Heart left ventricle (tissue), 16 donors: ENCODE measurements at regions of chr5 and their contacts with region 1.

Region 1: DNA sequence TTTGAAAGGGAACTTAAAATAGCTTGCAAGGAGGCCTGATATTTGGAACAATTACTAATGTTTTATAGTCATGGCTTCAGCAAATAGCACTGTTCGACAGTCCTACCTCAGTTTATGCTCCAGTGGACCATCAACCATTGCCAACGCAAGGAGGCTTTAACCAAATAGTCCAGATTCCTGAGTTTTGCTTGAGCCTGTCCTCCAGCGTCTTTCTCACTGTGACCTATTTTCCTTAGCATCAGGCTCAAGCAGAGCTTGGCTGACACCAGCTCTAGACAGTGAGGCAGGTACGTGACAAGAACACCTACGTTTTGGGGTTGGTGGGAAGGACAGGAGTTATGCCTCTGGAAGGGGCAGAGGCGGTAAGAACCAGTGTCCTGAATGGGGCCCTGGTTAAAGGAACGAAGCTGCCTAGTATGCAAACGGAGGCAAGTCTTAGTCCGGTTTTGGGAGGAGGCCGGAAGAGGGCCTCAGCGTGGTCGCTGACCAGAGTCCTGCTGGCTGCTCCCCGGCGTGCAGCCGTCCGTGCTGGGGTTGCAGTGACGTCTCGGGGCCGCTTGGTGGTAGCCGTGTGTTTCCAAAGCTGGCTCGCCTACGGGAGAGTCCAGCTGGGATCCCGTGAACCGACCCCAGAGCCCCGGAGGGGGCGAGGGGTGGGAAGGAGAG is 998 bp upstream of the FGF18 start:
- DNase-seq: peak; percentile 83 to 91 (median 85)
- ATAC-seq: peak; percentile 79 to 86 (median 80)
- H3K4me3 ChIP-seq: peak overlapping the region; percentile 44 to 77 (median 59)
- H3K27ac ChIP-seq: peak overlapping the region in 8 of 12 donors; percentile 73 to 93 (median 84)
- H3K4me1 ChIP-seq: peaks cover 4 to 54% (median 26%) of the 10 kb centered on the region in 12 donors
- H3K27me3 ChIP-seq: peaks cover 0 to 29% (median 0%) of the 10 kb centered on the region in 9 donors
- CTCF ChIP-seq: peak; percentile 77 to 99 (median 94)
- POLR2A ChIP-seq: no peak

Region 2: GRCh38 chr5:171484460-171484899 is 66.0 kb after region 1 on chr5:
- intact Hi-C with region 1: loop called in 5 of 10 experiments (anchors 5 to 10 kb)
- DNase-seq: no peak
- ATAC-seq: peak in 2 of 4 donors; percentile 37 to 42
- H3K4me3 ChIP-seq: no peak overlapping the region
- H3K27ac ChIP-seq: peak overlapping the region in 4 of 12 donors; percentile 20 to 69 (median 47)
- H3K4me1 ChIP-seq: peaks cover 0 to 23% (median 4%) of the 10 kb centered on the region in 12 donors
- H3K27me3 ChIP-seq: no peaks in the 10 kb centered on the region
- CTCF ChIP-seq: peak in 11 of 12 donors; percentile 49 to 80 (median 67)
- POLR2A ChIP-seq: no peak

Region 3: DNA sequence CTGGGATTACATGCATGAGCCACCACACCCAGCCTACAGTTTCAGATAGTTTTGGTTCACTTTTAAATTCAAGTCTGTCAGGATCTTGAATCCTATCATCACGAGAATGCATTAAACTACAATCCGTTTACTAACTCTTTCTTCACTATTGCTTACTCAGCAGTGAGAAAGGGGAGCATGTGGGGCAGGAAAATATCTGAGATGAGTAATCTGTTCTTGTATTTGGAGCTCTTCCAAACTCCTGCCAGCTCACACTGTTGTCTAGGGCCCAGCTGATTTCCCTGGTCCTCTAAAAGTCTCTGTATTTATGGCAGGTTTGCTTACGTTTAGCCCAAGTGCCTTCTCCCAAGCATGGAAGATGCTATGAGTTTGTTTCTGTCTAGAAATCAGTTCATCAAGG is 153.2 kb after region 1 on chr5:
- intact Hi-C with region 1: loop called in 5 of 10 experiments (anchors 5 to 10 kb)
- DNase-seq: no peak
- ATAC-seq: no peak
- H3K4me3 ChIP-seq: no peak overlapping the region
- H3K27ac ChIP-seq: peak overlapping the region in 1 of 12 donors; percentile 78
- H3K4me1 ChIP-seq: peaks cover 0 to 18% (median 0%) of the 10 kb centered on the region in 12 donors
- H3K27me3 ChIP-seq: no peaks in the 10 kb centered on the region
- CTCF ChIP-seq: no peak
- POLR2A ChIP-seq: no peak

Region 4: GRCh38 chr5:171630027-171630669 is 211.7 kb after region 1 on chr5:
- intact Hi-C with region 1: loop called in 5 of 10 experiments (anchors 1 to 10 kb)
- DNase-seq: peak; percentile 68 to 83 (median 71)
- ATAC-seq: peak; percentile 87 to 97 (median 93)
- H3K4me3 ChIP-seq: peak overlapping the region in 5 of 12 donors; percentile 8 to 32 (median 9)
- H3K27ac ChIP-seq: no peak overlapping the region
- H3K4me1 ChIP-seq: peaks cover 0 to 31% (median 8%) of the 10 kb centered on the region in 12 donors
- H3K27me3 ChIP-seq: no peaks in the 10 kb centered on the region
- CTCF ChIP-seq: peak in 11 of 12 donors; percentile 21 to 71 (median 64)
- POLR2A ChIP-seq: no peak

Region 5: GRCh38 chr5:171743436-171744076 is 325.1 kb after region 1 on chr5:
- intact Hi-C with region 1: loop called in 3 of 10 experiments (anchors 5 to 10 kb)
- DNase-seq: no peak
- ATAC-seq: no peak
- H3K4me3 ChIP-seq: no peak overlapping the region
- H3K27ac ChIP-seq: no peak overlapping the region
- H3K4me1 ChIP-seq: peaks cover 0 to 17% (median 0%) of the 10 kb centered on the region in 12 donors
- H3K27me3 ChIP-seq: no peaks in the 10 kb centered on the region
- CTCF ChIP-seq: no peak
- POLR2A ChIP-seq: no peak

Region 6: GRCh38 chr5:171757853-171758535 is 339.5 kb after region 1 on chr5:
- intact Hi-C with region 1: no loop called
- DNase-seq: no peak
- ATAC-seq: no peak
- H3K4me3 ChIP-seq: no peak overlapping the region
- H3K27ac ChIP-seq: no peak overlapping the region
- H3K4me1 ChIP-seq: peaks cover 0 to 10% (median 0%) of the 10 kb centered on the region in 12 donors
- H3K27me3 ChIP-seq: no peaks in the 10 kb centered on the region
- CTCF ChIP-seq: no peak
- POLR2A ChIP-seq: no peak

Region 7: GRCh38 chr5:171907725-171908343 is 489.4 kb after region 1 on chr5:
- intact Hi-C with region 1: loop called (anchors 1 to 5 kb)
- DNase-seq: peak in 3 of 5 donors; percentile 30 to 49 (median 40)
- ATAC-seq: peak; percentile 49 to 85 (median 79)
- H3K4me3 ChIP-seq: no peak overlapping the region
- H3K27ac ChIP-seq: no peak overlapping the region
- H3K4me1 ChIP-seq: peaks cover 0 to 44% (median 27%) of the 10 kb centered on the region in 12 donors
- H3K27me3 ChIP-seq: no peaks in the 10 kb centered on the region
- CTCF ChIP-seq: peak; percentile 68 to 87 (median 78)
- POLR2A ChIP-seq: no peak

Region 8: DNA sequence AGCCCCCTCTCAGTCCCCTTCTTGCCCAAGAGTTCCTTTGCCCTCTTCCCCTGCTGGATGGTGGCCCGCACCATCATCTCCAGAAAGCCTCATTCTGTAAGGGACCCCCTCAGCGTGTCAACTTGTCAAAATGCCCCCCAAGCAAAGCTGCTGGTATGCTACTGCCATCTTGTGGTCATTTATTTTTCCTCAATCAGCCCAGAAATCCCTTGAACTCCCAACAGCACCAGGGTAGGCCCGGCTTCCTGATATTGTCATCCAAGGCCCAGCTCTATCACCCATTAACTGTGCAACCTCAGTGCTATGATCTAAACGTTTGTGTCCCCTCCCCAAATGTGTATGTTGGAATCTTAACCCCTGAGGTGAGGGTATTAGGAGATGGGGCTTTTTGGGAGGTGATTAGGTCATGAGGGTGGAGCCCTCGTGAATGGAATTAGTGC is 641.2 kb after region 1 on chr5:
- intact Hi-C with region 1: loop called in 2 of 10 experiments (anchors 10 kb)
- DNase-seq: no peak
- ATAC-seq: peak in 2 of 4 donors; percentile 18 to 38
- H3K4me3 ChIP-seq: no peak overlapping the region
- H3K27ac ChIP-seq: no peak overlapping the region
- H3K4me1 ChIP-seq: no peaks in the 10 kb centered on the region
- H3K27me3 ChIP-seq: no peaks in the 10 kb centered on the region
- CTCF ChIP-seq: peak; percentile 44 to 66 (median 57)
- POLR2A ChIP-seq: no peak